ENCODE measurements at regions of chr15 and their contacts with region 1.

Region 1: GRCh38 chr15:39686000-39686613 is 96.5 kb downstream of the FSIP1 start:
- DNase-seq: peak in 6 of 9 donors; percentile 10 to 43 (median 33)
- ATAC-seq: peak; percentile 51
- H3K4me3 ChIP-seq: no peak overlapping the region
- H3K4me3 Mint-ChIP-seq: no peak overlapping the region
- H3K27ac ChIP-seq: no peak overlapping the region
- H3K27ac Mint-ChIP-seq: no peak overlapping the region
- H3K4me1 ChIP-seq: no peaks in the 10 kb centered on the region
- H3K4me1 Mint-ChIP-seq: peaks cover 0 to 5% (median 0%) of the 10 kb centered on the region in 7 donors
- H3K27me3 ChIP-seq: no peaks in the 10 kb centered on the region
- H3K27me3 Mint-ChIP-seq: peaks cover 0 to 15% (median 0%) of the 10 kb centered on the region in 5 donors

Region 2: GRCh38 chr15:39624806-39625205 is 61.3 kb before region 1 on chr15:
- CTCF ChIA-PET with region 1: no interaction called
- POLR2A ChIA-PET with region 1: no interaction called
- intact Hi-C with region 1: loop called in 1 of 2 experiments (anchors 2 kb)
- DNase-seq: peak in 1 of 9 donors; percentile 63
- ATAC-seq: peak; percentile 77
- H3K4me3 ChIP-seq: no peak overlapping the region
- H3K4me3 Mint-ChIP-seq: peak overlapping the region in 2 of 10 donors; percentile 70 to 83
- H3K27ac ChIP-seq: no peak overlapping the region
- H3K27ac Mint-ChIP-seq: peak overlapping the region in 6 of 9 donors; percentile 28 to 100 (median 78)
- H3K4me1 ChIP-seq: peaks cover 15 to 80% of the 10 kb centered on the region in 2 donors
- H3K4me1 Mint-ChIP-seq: peaks cover 28 to 84% (median 33%) of the 10 kb centered on the region in 7 donors
- H3K27me3 ChIP-seq: no peaks in the 10 kb centered on the region
- H3K27me3 Mint-ChIP-seq: peaks cover 0 to 3% (median under 1%) of the 10 kb centered on the region in 5 donors

Region 3: GRCh38 chr15:39874890-39875549 is 188.9 kb after region 1 on chr15:
- CTCF ChIA-PET with region 1: interaction called, 3 read pairs
- POLR2A ChIA-PET with region 1: no interaction called
- intact Hi-C with region 1: loop called (anchors 1 to 5 kb)
- DNase-seq: peak in 5 of 9 donors; percentile 2 to 21 (median 9)
- ATAC-seq: peak; percentile 51
- H3K4me3 ChIP-seq: no peak overlapping the region
- H3K4me3 Mint-ChIP-seq: no peak overlapping the region
- H3K27ac ChIP-seq: no peak overlapping the region
- H3K27ac Mint-ChIP-seq: no peak overlapping the region
- H3K4me1 ChIP-seq: no peaks in the 10 kb centered on the region
- H3K4me1 Mint-ChIP-seq: no peaks in the 10 kb centered on the region
- H3K27me3 ChIP-seq: no peaks in the 10 kb centered on the region
- H3K27me3 Mint-ChIP-seq: peaks cover 0 to 21% (median 0%) of the 10 kb centered on the region in 5 donors

Region 4: GRCh38 chr15:40044717-40045571 is 358.8 kb after region 1 on chr15:
- CTCF ChIA-PET with region 1: no interaction called
- POLR2A ChIA-PET with region 1: no interaction called
- intact Hi-C with region 1: loop called in 1 of 2 experiments (anchors 10 kb)
- DNase-seq: peak; percentile 57 to 85 (median 74)
- ATAC-seq: peak; percentile 94
- H3K4me3 ChIP-seq: no peak overlapping the region
- H3K4me3 Mint-ChIP-seq: peak overlapping the region; percentile 16 to 76 (median 68)
- H3K27ac ChIP-seq: peak overlapping the region; percentile 53
- H3K27ac Mint-ChIP-seq: peak overlapping the region; percentile 34 to 88 (median 83)
- H3K4me1 ChIP-seq: peaks cover 40 to 50% of the 10 kb centered on the region in 2 donors
- H3K4me1 Mint-ChIP-seq: peaks cover 36 to 71% (median 62%) of the 10 kb centered on the region in 7 donors
- H3K27me3 ChIP-seq: no peaks in the 10 kb centered on the region
- H3K27me3 Mint-ChIP-seq: no peaks in the 10 kb centered on the region

Measured in naive thymus-derived CD4-positive, alpha-beta T cell (primary cell).